ENCODE measurements at regions of chr3 and their contacts with region 1.

Region 1: DNA sequence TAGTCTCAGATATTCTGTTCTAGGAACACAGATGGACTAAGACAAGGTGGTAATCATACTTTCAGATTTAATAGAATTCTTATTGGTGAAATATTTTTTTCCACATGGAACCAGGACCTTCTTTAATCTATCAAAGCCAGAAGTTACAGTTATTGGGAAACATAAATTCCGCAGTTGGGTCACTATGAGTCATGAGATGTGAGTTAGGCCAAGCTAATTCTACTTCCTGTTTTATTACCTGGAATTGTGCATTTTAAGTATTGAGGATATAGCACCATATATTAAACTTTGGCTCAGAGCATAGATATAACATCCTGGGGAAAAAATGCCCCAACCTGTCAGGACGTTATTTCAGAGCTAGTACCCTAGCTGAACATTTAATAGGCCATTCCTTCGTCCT is 96.4 kb upstream of the P3H2 start:
- DNase-seq: no peak
- ATAC-seq: no peak
- H3K4me3 ChIP-seq: no peak overlapping the region
- H3K4me3 Mint-ChIP-seq: no peak overlapping the region
- H3K27ac ChIP-seq: no peak overlapping the region
- H3K27ac Mint-ChIP-seq: no peak overlapping the region
- H3K4me1 ChIP-seq: no peaks in the 10 kb centered on the region
- H3K4me1 Mint-ChIP-seq: no peaks in the 10 kb centered on the region
- H3K27me3 ChIP-seq: no peaks in the 10 kb centered on the region
- H3K27me3 Mint-ChIP-seq: no peaks in the 10 kb centered on the region
- CTCF ChIP-seq: no peak

Region 2: GRCh38 chr3:188974856-188975599 is 1242.1 kb before region 1 on chr3:
- CTCF ChIA-PET with region 1: no interaction called
- POLR2A ChIA-PET with region 1: no interaction called
- intact Hi-C with region 1: loop called in 1 of 2 experiments (anchors 5 kb)
- DNase-seq: peak in 6 of 9 experiments; percentile 10 to 80 (median 54)
- ATAC-seq: peak; percentile 80
- H3K4me3 ChIP-seq: no peak overlapping the region
- H3K4me3 Mint-ChIP-seq: peak overlapping the region; percentile 22
- H3K27ac ChIP-seq: peak overlapping the region; percentile 0 to 39
- H3K27ac Mint-ChIP-seq: peak overlapping the region; percentile 73
- H3K4me1 ChIP-seq: peaks cover 14% of the 10 kb centered on the region
- H3K4me1 Mint-ChIP-seq: peaks cover 25% of the 10 kb centered on the region
- H3K27me3 ChIP-seq: no peaks in the 10 kb centered on the region
- H3K27me3 Mint-ChIP-seq: peaks cover 10% of the 10 kb centered on the region
- CTCF ChIP-seq: no peak